Endothelial cell of umbilical vein (primary cell): ENCODE measurements at regions of chr15 and their contacts with region 1.

Region 1: DNA sequence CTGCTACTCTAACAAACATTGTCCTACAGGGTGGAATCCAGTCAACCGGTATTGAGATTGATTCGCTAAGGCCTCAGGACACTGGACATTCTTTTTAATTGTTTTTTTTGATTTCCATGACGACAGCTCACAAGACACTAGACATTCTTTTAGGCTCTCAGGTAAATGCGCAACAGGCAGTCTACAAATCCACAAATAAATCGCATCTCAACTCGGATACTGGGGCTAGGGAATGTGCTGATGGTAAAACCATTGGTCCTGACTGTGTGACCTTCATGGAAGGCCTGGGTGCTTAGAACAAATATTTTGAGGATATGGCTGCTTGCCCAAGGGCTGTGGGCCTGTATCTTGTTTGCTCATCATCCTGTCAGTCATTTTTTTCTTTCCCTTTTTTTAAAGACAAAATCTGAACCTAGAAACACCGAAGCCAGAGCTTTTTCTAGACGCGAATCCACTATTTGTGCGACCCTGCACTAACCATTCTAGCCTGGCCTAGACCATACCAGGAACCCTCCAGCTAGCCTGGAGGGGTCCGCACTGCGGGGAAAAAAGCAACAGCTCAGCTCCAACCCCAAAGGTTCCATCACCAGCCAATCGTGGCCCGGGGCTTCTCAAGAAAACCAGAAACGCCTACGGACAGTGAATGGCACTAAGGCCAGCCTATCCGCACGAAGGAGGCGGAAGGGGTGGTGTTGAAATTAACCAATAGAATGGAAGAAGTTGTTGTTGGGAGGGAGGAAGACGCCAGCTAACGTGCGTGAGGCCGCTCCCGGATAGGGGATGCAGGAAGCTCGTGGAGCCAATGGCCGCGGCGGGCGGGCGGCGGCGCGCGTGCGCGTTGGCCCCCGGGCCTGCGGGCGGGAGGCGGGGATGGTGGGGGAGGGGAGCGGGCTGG is 18.1 kb upstream of the CHD2 start:
- DNase-seq: peak; percentile 100
- H3K4me3 ChIP-seq: peak overlapping the region in 2 of 3 experiments; percentile 49 to 67
- H3K27ac ChIP-seq: peak overlapping the region; percentile 52
- H3K4me1 ChIP-seq: peaks cover 23% of the 10 kb centered on the region
- H3K27me3 ChIP-seq: peaks cover 17 to 20% of the 10 kb centered on the region in 2 experiments
- CTCF ChIP-seq: no peak
- POLR2A ChIP-seq: peak; percentile 52

Region 2: DNA sequence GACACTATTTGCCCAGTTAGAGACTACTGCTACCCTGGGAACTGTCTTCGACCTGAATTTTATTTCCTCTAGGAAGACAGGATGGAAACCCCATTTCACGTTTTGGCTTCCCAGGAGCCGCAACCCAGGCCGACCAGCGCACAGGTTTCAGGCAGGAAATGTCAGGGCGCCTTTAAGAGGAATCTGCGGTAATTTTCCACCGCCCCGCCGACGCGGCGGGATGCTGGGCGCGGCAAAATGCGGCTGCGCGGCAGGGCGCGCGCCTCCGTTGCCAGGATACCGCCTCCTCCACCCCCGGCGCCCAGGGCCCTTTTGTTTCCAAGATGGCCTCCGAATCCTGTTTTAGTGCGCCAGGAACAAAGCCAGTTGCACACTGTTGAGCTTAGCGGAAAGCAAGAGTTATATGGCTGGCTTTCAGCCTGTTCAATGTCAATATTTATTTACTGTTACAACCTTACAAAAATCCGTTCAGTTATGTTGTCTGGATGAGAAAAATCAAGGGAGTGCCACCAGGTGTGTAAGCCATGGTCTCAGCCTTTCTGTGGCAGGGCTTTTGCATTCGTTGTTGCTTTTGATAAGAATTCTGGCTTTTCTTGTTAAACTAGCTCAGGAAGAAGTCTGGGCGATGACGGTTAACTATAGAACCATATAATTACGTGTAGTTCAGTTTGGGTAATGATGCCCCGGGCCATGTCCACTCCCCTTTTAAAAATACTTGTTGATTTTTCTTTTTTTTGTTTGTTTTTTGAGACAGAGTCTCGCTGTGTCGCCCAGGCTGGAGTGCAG is 61.6 kb before region 1 on chr15:
- CTCF ChIA-PET with region 1: interaction called, 3 read pairs
- POLR2A ChIA-PET with region 1: interaction called, 4 read pairs
- dilution Hi-C with region 1: no loop called
- intact Hi-C with region 1: loop called (anchors 1 kb)
- DNase-seq: peak; percentile 94
- H3K4me3 ChIP-seq: peak overlapping the region; percentile 15 to 62 (median 19)
- H3K27ac ChIP-seq: peak overlapping the region; percentile 64
- H3K4me1 ChIP-seq: peaks cover 9% of the 10 kb centered on the region
- H3K27me3 ChIP-seq: peaks cover 0 to 2% of the 10 kb centered on the region in 2 experiments
- CTCF ChIP-seq: no peak
- POLR2A ChIP-seq: peak; percentile 79

Region 3: DNA sequence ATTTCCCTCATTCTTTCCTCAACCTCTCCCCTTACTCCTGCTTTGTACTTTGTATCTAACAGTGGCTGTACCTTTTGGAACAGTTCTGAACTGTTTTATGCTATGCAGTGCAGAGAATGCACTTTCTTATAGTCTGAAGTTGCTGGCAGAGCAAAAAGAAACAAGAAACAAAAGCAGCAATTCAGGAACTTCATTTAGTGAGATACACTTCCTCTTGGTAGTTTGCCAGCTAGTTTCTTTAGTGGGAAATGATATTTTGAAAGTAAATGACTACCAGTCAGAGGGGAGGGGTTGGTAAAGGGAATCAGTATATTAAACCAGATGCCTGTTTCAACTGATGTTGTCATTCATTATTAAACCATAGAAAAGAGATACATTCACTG is 36.9 kb before region 1 on chr15:
- CTCF ChIA-PET with region 1: no interaction called
- POLR2A ChIA-PET with region 1: interaction called, 3 read pairs
- dilution Hi-C with region 1: no loop called
- intact Hi-C with region 1: loop called (anchors 1 kb)
- DNase-seq: peak; percentile 81
- H3K4me3 ChIP-seq: no peak overlapping the region
- H3K27ac ChIP-seq: no peak overlapping the region
- H3K4me1 ChIP-seq: peaks cover 9% of the 10 kb centered on the region
- H3K27me3 ChIP-seq: peaks cover 49 to 54% of the 10 kb centered on the region in 2 experiments
- CTCF ChIP-seq: no peak
- POLR2A ChIP-seq: no peak

Region 4: GRCh38 chr15:92917606-92918407 is 35.8 kb after region 1 on chr15:
- CTCF ChIA-PET with region 1: interaction called, 9 read pairs
- POLR2A ChIA-PET with region 1: interaction called, 7 read pairs
- dilution Hi-C with region 1: no loop called
- intact Hi-C with region 1: loop called (anchors 1 kb)
- DNase-seq: peak; percentile 98
- H3K4me3 ChIP-seq: peak overlapping the region in 1 of 3 experiments; percentile 42
- H3K27ac ChIP-seq: peak overlapping the region; percentile 87
- H3K4me1 ChIP-seq: peaks cover 56% of the 10 kb centered on the region
- H3K27me3 ChIP-seq: no peaks in the 10 kb centered on the region
- CTCF ChIP-seq: peak; percentile 69 to 82
- POLR2A ChIP-seq: peak; percentile 54